Endothelial cell of umbilical vein (primary cell): ENCODE measurements at regions of chr9 and their contacts with region 1.

Region 1: GRCh38 chr9:15333376-15333881 is 26.4 kb upstream of the TTC39B start:
- DNase-seq: no peak
- H3K4me3 ChIP-seq: no peak overlapping the region
- H3K27ac ChIP-seq: no peak overlapping the region
- H3K4me1 ChIP-seq: no peaks in the 10 kb centered on the region
- H3K27me3 ChIP-seq: peaks cover 0 to 2% of the 10 kb centered on the region in 2 experiments
- CTCF ChIP-seq: no peak
- POLR2A ChIP-seq: no peak

Region 2: GRCh38 chr9:15010581-15010980 is 322.8 kb before region 1 on chr9:
- CTCF ChIA-PET with region 1: no interaction called
- POLR2A ChIA-PET with region 1: no interaction called
- dilution Hi-C with region 1: no loop called
- intact Hi-C with region 1: no loop called
- DNase-seq: no peak
- H3K4me3 ChIP-seq: no peak overlapping the region
- H3K27ac ChIP-seq: no peak overlapping the region
- H3K4me1 ChIP-seq: no peaks in the 10 kb centered on the region
- H3K27me3 ChIP-seq: no peaks in the 10 kb centered on the region
- CTCF ChIP-seq: no peak
- POLR2A ChIP-seq: no peak

Region 3: GRCh38 chr9:15346837-15347236 is 13.4 kb after region 1 on chr9:
- CTCF ChIA-PET with region 1: interaction called, 11 read pairs
- POLR2A ChIA-PET with region 1: no interaction called
- dilution Hi-C with region 1: no loop called
- intact Hi-C with region 1: no loop called
- DNase-seq: no peak
- H3K4me3 ChIP-seq: no peak overlapping the region
- H3K27ac ChIP-seq: no peak overlapping the region
- H3K4me1 ChIP-seq: no peaks in the 10 kb centered on the region
- H3K27me3 ChIP-seq: no peaks in the 10 kb centered on the region
- CTCF ChIP-seq: no peak
- POLR2A ChIP-seq: no peak

Region 4: DNA sequence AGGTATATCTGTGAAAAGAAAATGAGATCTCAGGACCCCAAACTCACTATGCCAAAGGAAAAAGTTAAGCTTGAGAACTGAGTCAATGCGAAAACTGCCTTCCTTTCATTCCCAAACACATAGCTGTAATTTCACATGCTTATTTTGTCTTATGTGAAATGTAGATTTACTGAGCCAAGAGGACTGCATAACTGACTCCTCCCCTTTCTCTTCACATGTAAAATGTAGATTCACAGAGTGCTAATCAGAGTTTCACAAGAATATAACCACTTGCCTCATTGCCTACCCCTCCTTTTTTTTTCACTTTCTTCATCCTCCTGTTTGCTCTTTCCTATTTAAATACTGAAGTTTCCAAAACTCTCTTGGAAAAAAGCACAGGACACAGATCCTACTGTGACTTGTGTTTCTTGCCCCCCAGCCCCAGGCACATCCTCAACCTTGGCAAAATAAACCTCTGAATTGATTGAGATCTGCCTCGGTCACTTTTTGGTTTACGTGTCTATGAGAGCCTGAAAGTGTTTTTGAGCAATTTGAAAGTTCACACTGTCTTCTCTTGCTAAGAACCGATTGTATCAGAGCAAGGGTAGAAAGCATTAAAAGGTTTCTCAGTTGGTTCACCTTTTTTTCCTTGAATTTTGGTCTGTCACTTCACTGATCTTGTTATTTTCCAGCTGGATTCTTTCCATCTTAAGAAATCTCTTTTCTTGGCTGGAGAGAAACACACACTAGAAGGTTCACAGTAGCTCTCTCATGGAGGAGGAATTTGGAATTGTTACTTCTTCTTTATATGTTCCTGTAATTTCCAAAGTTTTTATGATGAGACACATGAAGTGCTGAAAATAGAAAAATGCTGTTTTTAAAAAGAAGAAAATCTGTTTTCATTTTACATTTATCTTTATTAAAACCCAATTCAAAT is 44.5 kb after region 1 on chr9:
- CTCF ChIA-PET with region 1: no interaction called
- POLR2A ChIA-PET with region 1: no interaction called
- dilution Hi-C with region 1: no loop called
- intact Hi-C with region 1: no loop called
- DNase-seq: no peak
- H3K4me3 ChIP-seq: no peak overlapping the region
- H3K27ac ChIP-seq: no peak overlapping the region
- H3K4me1 ChIP-seq: no peaks in the 10 kb centered on the region
- H3K27me3 ChIP-seq: peaks cover 0 to 2% of the 10 kb centered on the region in 2 experiments
- CTCF ChIP-seq: no peak
- POLR2A ChIP-seq: no peak